Activated B cell treated with CpG ODN at 0.5 μM for 24 hours (primary cell): ENCODE measurements at regions of chr7 and their contacts with region 1.

Region 1: DNA sequence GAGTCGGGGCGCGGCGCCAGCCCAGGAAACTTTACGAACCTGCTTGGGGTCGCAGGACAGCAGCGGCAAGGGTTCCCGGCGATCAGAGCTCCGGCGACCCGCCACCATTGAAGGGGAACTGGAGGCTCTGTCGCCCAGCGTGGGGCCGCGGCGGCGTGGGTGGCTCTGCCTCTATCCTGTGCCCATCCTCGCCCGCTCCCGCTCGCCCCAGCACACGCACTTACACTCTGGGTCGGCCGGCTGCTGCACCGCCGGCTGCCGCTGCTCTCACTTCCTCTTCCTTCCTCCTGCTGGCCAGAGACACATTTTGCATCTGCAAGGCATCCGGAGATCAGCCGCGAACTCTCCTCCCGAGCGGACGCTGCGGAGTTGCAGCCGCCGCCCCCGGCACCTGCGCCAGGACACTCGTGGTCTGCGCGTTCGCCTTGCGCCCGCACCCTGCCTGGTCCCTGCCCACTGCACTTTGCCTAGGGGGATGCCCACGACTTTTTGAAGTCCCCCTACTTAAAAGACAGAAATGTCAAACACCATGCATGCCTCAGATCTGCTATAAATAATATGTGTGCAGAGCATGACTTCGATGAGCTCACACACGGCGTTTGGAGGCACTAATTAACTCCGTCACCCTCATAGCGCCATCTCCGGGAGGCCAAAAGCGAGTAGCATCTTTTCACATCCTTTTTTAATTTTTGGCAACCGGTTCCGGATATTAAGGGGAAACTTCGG is at the start of gene ELMO1:
- DNase-seq: peak; percentile 81
- ATAC-seq: peak; percentile 81
- H3K4me3 Mint-ChIP-seq: peak within 1 kb of the TSS; percentile 92
- H3K27ac Mint-ChIP-seq: peak within 1 kb of the TSS; percentile 99
- H3K4me1 Mint-ChIP-seq: peaks cover 47% of the 10 kb centered on the region
- H3K27me3 Mint-ChIP-seq: no peaks in the 10 kb centered on the region
- CTCF ChIP-seq: no peak
- total RNA-seq, gene ELMO1: 108 and 132 TPM in 2 replicates

Region 2: DNA sequence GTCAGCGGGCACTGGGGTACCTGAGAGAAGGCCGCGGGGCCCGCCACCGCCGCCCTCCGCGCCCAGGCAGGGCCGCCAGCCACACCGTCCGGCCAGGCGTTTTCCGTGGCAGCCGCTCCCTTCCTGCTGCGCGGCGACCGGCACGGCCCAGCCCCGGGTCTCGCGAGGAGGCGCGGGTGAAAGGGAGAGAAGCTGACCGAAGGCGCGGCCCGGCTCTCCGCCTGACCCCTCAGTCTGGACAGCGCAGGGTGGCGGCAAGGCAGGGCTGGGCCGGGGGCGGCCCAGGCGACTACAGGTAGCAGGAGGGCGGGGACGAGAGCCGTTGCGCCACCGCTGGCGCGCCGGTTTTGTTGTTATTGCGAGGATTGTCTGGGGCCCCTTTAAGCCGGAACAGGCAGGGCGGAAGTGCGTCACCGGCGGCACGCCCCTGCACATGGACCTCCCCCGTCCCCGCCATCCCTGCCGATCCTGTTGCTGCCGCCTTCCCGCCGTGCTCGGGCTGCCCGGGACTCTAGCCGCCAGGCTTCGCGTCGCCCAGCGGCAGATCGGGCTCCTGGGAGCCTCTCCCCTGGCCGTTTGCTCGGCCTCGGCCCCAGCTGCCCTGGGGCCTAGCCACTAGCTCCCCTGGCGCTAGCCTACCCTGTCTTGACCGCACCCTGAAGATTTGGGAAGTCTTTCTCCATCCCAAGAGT is 1753.9 kb before region 1 on chr7 and contains the start of gene HERPUD2:
- CTCF ChIA-PET with region 1: no interaction called
- POLR2A ChIA-PET with region 1: no interaction called
- intact Hi-C with region 1: loop called (anchors 10 kb)
- DNase-seq: peak; percentile 88
- ATAC-seq: peak; percentile 90
- H3K4me3 Mint-ChIP-seq: peak within 1 kb of the TSS; percentile 95
- H3K27ac Mint-ChIP-seq: peak within 1 kb of the TSS; percentile 92
- H3K4me1 Mint-ChIP-seq: peaks cover 61% of the 10 kb centered on the region
- H3K27me3 Mint-ChIP-seq: no peaks in the 10 kb centered on the region
- CTCF ChIP-seq: no peak
- total RNA-seq, gene HERPUD2: 26.2 and 31.5 TPM in 2 replicates

Region 3: GRCh38 chr7:37208528-37208927 is 240.3 kb before region 1 on chr7:
- CTCF ChIA-PET with region 1: interaction called, 3 read pairs
- POLR2A ChIA-PET with region 1: no interaction called
- intact Hi-C with region 1: loop called (anchors 1 kb)
- DNase-seq: no peak
- ATAC-seq: peak; percentile 75
- H3K4me3 Mint-ChIP-seq: no peak overlapping the region
- H3K27ac Mint-ChIP-seq: peak overlapping the region; percentile 10
- H3K4me1 Mint-ChIP-seq: peaks cover 11% of the 10 kb centered on the region
- H3K27me3 Mint-ChIP-seq: no peaks in the 10 kb centered on the region
- CTCF ChIP-seq: no peak

Region 4: DNA sequence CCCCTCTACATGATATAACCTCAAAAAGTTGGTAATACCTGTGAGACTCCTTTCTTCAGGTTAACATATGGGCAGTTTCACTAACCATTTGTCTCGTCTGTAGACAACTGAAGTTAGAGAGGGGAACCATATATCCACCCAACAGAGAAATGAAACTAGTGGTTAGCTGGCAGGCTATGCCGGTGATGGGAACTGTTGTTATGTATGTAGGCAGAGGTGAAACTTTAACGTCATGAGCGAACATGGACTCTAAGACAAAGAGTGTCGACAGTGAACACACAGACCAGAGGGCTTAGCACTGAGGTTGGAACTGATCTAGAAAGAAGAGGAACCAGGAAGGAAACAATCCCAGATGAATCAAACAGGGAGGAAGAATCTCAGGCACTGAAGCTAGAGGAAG is 112.5 kb before region 1 on chr7:
- CTCF ChIA-PET with region 1: interaction called, 4 read pairs
- POLR2A ChIA-PET with region 1: interaction called, 26 read pairs
- intact Hi-C with region 1: no loop called
- DNase-seq: no peak
- ATAC-seq: peak; percentile 92
- H3K4me3 Mint-ChIP-seq: peak overlapping the region; percentile 77
- H3K27ac Mint-ChIP-seq: peak overlapping the region; percentile 95
- H3K4me1 Mint-ChIP-seq: peaks cover 83% of the 10 kb centered on the region
- H3K27me3 Mint-ChIP-seq: no peaks in the 10 kb centered on the region
- CTCF ChIP-seq: no peak

Region 5: GRCh38 chr7:37408291-37409228 is 40.2 kb before region 1 on chr7:
- CTCF ChIA-PET with region 1: interaction called, 3 read pairs
- POLR2A ChIA-PET with region 1: interaction called, 24 read pairs
- intact Hi-C with region 1: loop called (anchors 2 kb)
- DNase-seq: no peak
- ATAC-seq: peak; percentile 59
- H3K4me3 Mint-ChIP-seq: peak overlapping the region; percentile 76
- H3K27ac Mint-ChIP-seq: peak overlapping the region; percentile 73
- H3K4me1 Mint-ChIP-seq: peaks cover 69% of the 10 kb centered on the region
- H3K27me3 Mint-ChIP-seq: no peaks in the 10 kb centered on the region
- CTCF ChIP-seq: no peak

Region 6: GRCh38 chr7:37495574-37496184 is 46.9 kb after region 1 on chr7:
- CTCF ChIA-PET with region 1: interaction called, 4 read pairs
- POLR2A ChIA-PET with region 1: interaction called, 3 read pairs
- intact Hi-C with region 1: loop called (anchors 1 kb)
- DNase-seq: no peak
- ATAC-seq: peak; percentile 58
- H3K4me3 Mint-ChIP-seq: no peak overlapping the region
- H3K27ac Mint-ChIP-seq: no peak overlapping the region
- H3K4me1 Mint-ChIP-seq: no peaks in the 10 kb centered on the region
- H3K27me3 Mint-ChIP-seq: no peaks in the 10 kb centered on the region
- CTCF ChIP-seq: peak; percentile 91

Region 7: GRCh38 chr7:38147005-38147404 is 698.2 kb after region 1 on chr7:
- CTCF ChIA-PET with region 1: no interaction called
- POLR2A ChIA-PET with region 1: no interaction called
- intact Hi-C with region 1: no loop called
- DNase-seq: no peak
- ATAC-seq: no peak
- H3K4me3 Mint-ChIP-seq: no peak overlapping the region
- H3K27ac Mint-ChIP-seq: no peak overlapping the region
- H3K4me1 Mint-ChIP-seq: peaks cover 5% of the 10 kb centered on the region
- H3K27me3 Mint-ChIP-seq: peaks cover 8% of the 10 kb centered on the region
- CTCF ChIP-seq: no peak

Region 8: GRCh38 chr7:38178004-38178694 is 729.4 kb after region 1 on chr7 and contains the start of gene STARD3NL:
- CTCF ChIA-PET with region 1: no interaction called
- POLR2A ChIA-PET with region 1: no interaction called
- intact Hi-C with region 1: loop called (anchors 2 kb)
- DNase-seq: peak; percentile 81
- ATAC-seq: peak; percentile 96
- H3K4me3 Mint-ChIP-seq: peak within 1 kb of the TSS; percentile 97
- H3K27ac Mint-ChIP-seq: peak within 1 kb of the TSS; percentile 93
- H3K4me1 Mint-ChIP-seq: peaks cover 36% of the 10 kb centered on the region
- H3K27me3 Mint-ChIP-seq: no peaks in the 10 kb centered on the region
- CTCF ChIP-seq: no peak
- total RNA-seq, gene STARD3NL: 16.2 and 17.4 TPM in 2 replicates